Psoas muscle (tissue), 8 donors: ENCODE measurements at regions of chr15 and their contacts with region 1.

Region 1: DNA sequence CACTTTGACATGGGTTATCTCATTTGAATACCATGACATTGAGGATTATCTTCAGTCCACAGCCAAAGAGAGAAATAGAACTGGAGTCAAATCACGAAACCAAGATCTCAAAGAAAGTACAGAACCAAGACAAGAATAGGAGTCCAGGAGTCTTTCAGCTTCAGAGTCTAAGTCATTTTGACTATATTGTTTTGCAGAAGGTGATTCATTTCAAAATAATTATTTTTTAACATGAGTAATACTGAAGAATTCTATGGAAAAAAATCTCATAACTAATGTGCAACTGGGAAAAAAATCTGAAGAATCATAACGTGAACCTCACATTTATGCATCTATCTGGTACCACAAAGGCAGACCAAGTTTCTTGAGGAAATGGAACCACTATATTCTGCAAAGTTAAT is 60.3 kb downstream of the UBE3A start:
- DNase-seq: no peak
- ATAC-seq: no peak
- H3K4me3 ChIP-seq: no peak overlapping the region
- H3K27ac ChIP-seq: no peak overlapping the region
- H3K4me1 ChIP-seq: no peaks in the 10 kb centered on the region
- H3K27me3 ChIP-seq: no peaks in the 10 kb centered on the region
- CTCF ChIP-seq: no peak

Region 2: GRCh38 chr15:25339431-25339830 is 39.1 kb before region 1 on chr15:
- intact Hi-C with region 1: loop called in 1 of 2 experiments (anchors 5 kb)
- DNase-seq: no peak
- ATAC-seq: no peak
- H3K4me3 ChIP-seq: no peak overlapping the region
- H3K27ac ChIP-seq: no peak overlapping the region
- H3K4me1 ChIP-seq: no peaks in the 10 kb centered on the region
- H3K27me3 ChIP-seq: no peaks in the 10 kb centered on the region
- CTCF ChIP-seq: no peak

Region 3: DNA sequence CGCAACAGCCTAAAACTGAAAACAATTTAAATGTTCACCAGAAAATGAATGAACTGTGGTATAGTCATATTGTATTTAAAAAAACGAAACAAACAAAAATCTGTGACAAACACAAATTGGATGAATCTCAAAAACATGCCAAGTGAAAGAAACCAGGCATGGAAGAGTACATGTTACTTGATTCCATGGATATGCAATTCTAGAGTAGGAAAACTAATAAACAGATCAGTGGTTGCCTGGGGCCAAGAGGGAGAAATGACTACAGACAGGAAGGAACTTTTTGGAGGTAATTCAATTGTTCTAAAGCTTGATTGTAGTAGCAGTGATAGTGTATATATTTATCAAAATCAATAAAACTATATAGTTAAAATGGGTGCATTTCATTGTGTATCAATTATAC is 43.5 kb after region 1 on chr15:
- intact Hi-C with region 1: loop called in 1 of 2 experiments (anchors 5 kb)
- DNase-seq: no peak
- ATAC-seq: no peak
- H3K4me3 ChIP-seq: no peak overlapping the region
- H3K27ac ChIP-seq: no peak overlapping the region
- H3K4me1 ChIP-seq: peaks cover 57% of the 10 kb centered on the region
- H3K27me3 ChIP-seq: no peaks in the 10 kb centered on the region
- CTCF ChIP-seq: no peak